ENCODE measurements at regions of chr3 and their contacts with region 1.

Region 1: GRCh38 chr3:46923559-46924350 is 46.2 kb downstream of the PTH1R start:
- DNase-seq: no peak
- ATAC-seq: no peak
- H3K4me3 ChIP-seq: no peak overlapping the region
- H3K27ac ChIP-seq: no peak overlapping the region
- H3K4me1 ChIP-seq: peaks cover 39% of the 10 kb centered on the region
- H3K27me3 ChIP-seq: no peaks in the 10 kb centered on the region
- CTCF ChIP-seq: peak; percentile 35 to 37 (median 37); a peak in 5 of 6 replicates
- EP300 ChIP-seq: no peak
- POLR2A ChIP-seq: no peak
- RAD21 ChIP-seq: peak; percentile 67

Region 2: DNA sequence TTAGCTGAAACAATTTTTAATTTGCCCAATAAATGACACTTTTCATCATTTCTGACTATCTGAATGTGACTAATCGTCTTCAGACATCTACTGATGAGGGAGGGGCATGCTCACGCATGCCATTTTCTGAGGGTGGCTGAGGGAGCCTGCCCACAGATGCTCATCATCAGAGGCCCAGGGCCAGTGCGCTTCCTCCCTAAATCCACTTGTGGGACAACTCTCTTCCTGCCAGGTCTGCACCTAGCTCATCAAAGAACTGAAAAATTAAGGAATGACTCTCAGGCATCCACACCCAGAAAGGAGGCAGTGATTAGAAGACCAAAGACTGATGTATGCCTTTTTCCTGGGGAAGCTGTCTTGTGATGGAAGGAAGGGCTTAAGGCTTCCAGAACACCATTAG is 403.2 kb before region 1 on chr3:
- CTCF ChIA-PET with region 1: no interaction called
- POLR2A ChIA-PET with region 1: no interaction called
- RAD21 ChIA-PET with region 1: no interaction called
- SMC1A ChIA-PET with region 1: no interaction called
- in situ Hi-C with region 1: no loop called
- intact Hi-C with region 1: no loop called
- DNase-seq: no peak
- ATAC-seq: no peak
- H3K4me3 ChIP-seq: no peak overlapping the region
- H3K27ac ChIP-seq: no peak overlapping the region
- H3K4me1 ChIP-seq: no peaks in the 10 kb centered on the region
- H3K27me3 ChIP-seq: no peaks in the 10 kb centered on the region
- CTCF ChIP-seq: no peak
- EP300 ChIP-seq: no peak
- POLR2A ChIP-seq: no peak
- RAD21 ChIP-seq: no peak

Region 3: GRCh38 chr3:46935168-46935858 is 11.6 kb after region 1 on chr3:
- CTCF ChIA-PET with region 1: interaction called, 4 read pairs
- POLR2A ChIA-PET with region 1: interaction called, 44 read pairs
- RAD21 ChIA-PET with region 1: interaction called, 6 read pairs
- SMC1A ChIA-PET with region 1: interaction called, 53 read pairs
- in situ Hi-C with region 1: no loop called
- intact Hi-C with region 1: no loop called
- DNase-seq: no peak
- ATAC-seq: no peak
- H3K4me3 ChIP-seq: no peak overlapping the region
- H3K27ac ChIP-seq: no peak overlapping the region
- H3K4me1 ChIP-seq: peaks cover 54% of the 10 kb centered on the region
- H3K27me3 ChIP-seq: no peaks in the 10 kb centered on the region
- CTCF ChIP-seq: no peak
- EP300 ChIP-seq: no peak
- POLR2A ChIP-seq: peak; percentile 4; the same call in 1 of the 2 replicates
- RAD21 ChIP-seq: no peak

Region 4: GRCh38 chr3:46953234-46954010 is 29.7 kb after region 1 on chr3:
- CTCF ChIA-PET with region 1: interaction called, 27 read pairs
- POLR2A ChIA-PET with region 1: interaction called, 163 read pairs
- RAD21 ChIA-PET with region 1: interaction called, 38 read pairs
- SMC1A ChIA-PET with region 1: interaction called, 298 read pairs
- in situ Hi-C with region 1: no loop called
- intact Hi-C with region 1: loop called (anchors 2 kb)
- DNase-seq: no peak
- ATAC-seq: peak; percentile 74
- H3K4me3 ChIP-seq: peak overlapping the region; percentile 11; the same call in 1 of the 2 replicates
- H3K27ac ChIP-seq: peak overlapping the region; percentile 75
- H3K4me1 ChIP-seq: peaks cover 73% of the 10 kb centered on the region
- H3K27me3 ChIP-seq: no peaks in the 10 kb centered on the region
- CTCF ChIP-seq: no peak
- EP300 ChIP-seq: 0 out of 4 replicates have a peak, but pooled peaks of 1 of the 2 experiments have one; percentile 23
- POLR2A ChIP-seq: no peak
- RAD21 ChIP-seq: no peak

Region 5: DNA sequence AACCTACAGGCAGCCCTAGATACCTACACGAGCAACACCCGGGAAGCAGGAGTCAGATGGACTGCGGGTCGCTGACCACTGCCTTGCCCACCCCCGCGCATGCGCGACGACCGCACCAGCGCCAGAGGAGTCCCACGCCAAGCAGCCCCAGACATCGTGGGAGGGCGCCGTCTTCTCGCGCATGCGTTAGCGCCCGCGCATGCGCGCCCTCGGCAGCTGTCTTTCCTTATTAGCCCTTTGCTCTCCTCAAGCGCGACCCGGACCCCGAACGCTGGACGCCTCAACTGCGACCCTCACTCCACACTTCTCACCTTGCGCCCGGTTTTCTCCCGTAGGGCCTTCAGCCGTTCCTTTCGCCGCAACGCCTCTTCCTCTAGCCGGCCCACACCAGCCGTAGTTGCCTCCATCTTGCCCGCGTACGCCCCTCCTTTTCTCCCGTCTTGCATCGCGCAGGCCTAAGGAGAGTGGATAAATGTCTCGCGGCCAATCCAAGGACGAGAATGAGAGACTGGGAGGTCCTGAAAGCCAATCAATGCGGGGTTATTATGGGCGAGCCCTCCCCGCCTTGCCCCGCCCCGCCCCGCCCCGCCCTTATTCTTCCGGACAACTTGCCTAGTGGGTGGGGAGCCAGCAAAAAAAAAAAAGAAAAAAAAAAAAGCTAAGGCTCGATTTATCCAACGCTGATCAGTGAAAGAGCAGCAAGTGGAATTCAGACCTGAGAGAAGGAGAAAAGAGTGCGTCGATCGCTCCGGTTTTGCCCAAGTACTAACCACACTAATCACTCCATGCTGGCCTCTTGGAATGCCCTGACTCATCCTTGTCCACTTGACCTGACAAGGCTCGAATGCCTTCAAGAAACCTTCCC is 52.8 kb after region 1 on chr3 and contains the start of gene CCDC12:
- CTCF ChIA-PET with region 1: interaction called, 9 read pairs
- POLR2A ChIA-PET with region 1: interaction called, 10 read pairs
- RAD21 ChIA-PET with region 1: interaction called, 28 read pairs
- SMC1A ChIA-PET with region 1: interaction called, 126 read pairs
- in situ Hi-C with region 1: no loop called
- intact Hi-C with region 1: loop called (anchors 1 kb)
- DNase-seq: peak; percentile 94
- ATAC-seq: peak; percentile 82
- H3K4me3 ChIP-seq: peak within 1 kb of the TSS; percentile 95
- H3K27ac ChIP-seq: peak within 1 kb of the TSS; percentile 91
- H3K4me1 ChIP-seq: peaks cover 32% of the 10 kb centered on the region
- H3K27me3 ChIP-seq: no peaks in the 10 kb centered on the region
- CTCF ChIP-seq: no peak
- EP300 ChIP-seq: no peak
- POLR2A ChIP-seq: peak; percentile 94
- RAD21 ChIP-seq: no peak
- polyA plus RNA-seq, gene CCDC12: 9.2 to 22.5 TPM

Region 6: GRCh38 chr3:46998121-46998851 is 74.5 kb after region 1 on chr3:
- CTCF ChIA-PET with region 1: interaction called, 14 read pairs
- POLR2A ChIA-PET with region 1: interaction called, 3 read pairs
- RAD21 ChIA-PET with region 1: interaction called, 4 read pairs
- SMC1A ChIA-PET with region 1: interaction called, 8 read pairs
- in situ Hi-C with region 1: no loop called
- intact Hi-C with region 1: loop called (anchors 1 kb)
- DNase-seq: no peak
- ATAC-seq: peak; percentile 85
- H3K4me3 ChIP-seq: no peak overlapping the region
- H3K27ac ChIP-seq: no peak overlapping the region
- H3K4me1 ChIP-seq: no peaks in the 10 kb centered on the region
- H3K27me3 ChIP-seq: no peaks in the 10 kb centered on the region
- CTCF ChIP-seq: peak; percentile 83 to 91 (median 86)
- EP300 ChIP-seq: no peak
- POLR2A ChIP-seq: no peak
- RAD21 ChIP-seq: peak; percentile 93

Region 7: GRCh38 chr3:47705391-47705790 is 781.6 kb after region 1 on chr3:
- CTCF ChIA-PET with region 1: no interaction called
- POLR2A ChIA-PET with region 1: no interaction called
- RAD21 ChIA-PET with region 1: no interaction called
- SMC1A ChIA-PET with region 1: no interaction called
- in situ Hi-C with region 1: no loop called
- intact Hi-C with region 1: no loop called
- DNase-seq: no peak
- ATAC-seq: no peak
- H3K4me3 ChIP-seq: no peak overlapping the region
- H3K27ac ChIP-seq: no peak overlapping the region
- H3K4me1 ChIP-seq: no peaks in the 10 kb centered on the region
- H3K27me3 ChIP-seq: no peaks in the 10 kb centered on the region
- CTCF ChIP-seq: no peak
- EP300 ChIP-seq: no peak
- POLR2A ChIP-seq: no peak
- RAD21 ChIP-seq: no peak

Measured in GM12878 (cell line).